ENCODE measurements at regions of chr17 and their contacts with region 1.

Region 1: GRCh38 chr17:43170766-43171585 is at the start of gene NBR1:
- DNase-seq: peak; percentile 94 to 98 (median 97)
- H3K4me3 ChIP-seq: peak within 1 kb of the TSS; percentile 85
- H3K27ac ChIP-seq: peak within 1 kb of the TSS; percentile 88 to 99
- H3K4me1 ChIP-seq: peaks cover 8% of the 10 kb centered on the region
- H3K27me3 ChIP-seq: no peaks in the 10 kb centered on the region
- CTCF ChIP-seq: peak in 2 of 3 donors; percentile 45 to 54
- EP300 ChIP-seq: no peak
- POLR2A ChIP-seq: peak; percentile 78
- total RNA-seq, gene NBR1: 58.2 to 89.1 (median 78.6) TPM

Region 2: DNA sequence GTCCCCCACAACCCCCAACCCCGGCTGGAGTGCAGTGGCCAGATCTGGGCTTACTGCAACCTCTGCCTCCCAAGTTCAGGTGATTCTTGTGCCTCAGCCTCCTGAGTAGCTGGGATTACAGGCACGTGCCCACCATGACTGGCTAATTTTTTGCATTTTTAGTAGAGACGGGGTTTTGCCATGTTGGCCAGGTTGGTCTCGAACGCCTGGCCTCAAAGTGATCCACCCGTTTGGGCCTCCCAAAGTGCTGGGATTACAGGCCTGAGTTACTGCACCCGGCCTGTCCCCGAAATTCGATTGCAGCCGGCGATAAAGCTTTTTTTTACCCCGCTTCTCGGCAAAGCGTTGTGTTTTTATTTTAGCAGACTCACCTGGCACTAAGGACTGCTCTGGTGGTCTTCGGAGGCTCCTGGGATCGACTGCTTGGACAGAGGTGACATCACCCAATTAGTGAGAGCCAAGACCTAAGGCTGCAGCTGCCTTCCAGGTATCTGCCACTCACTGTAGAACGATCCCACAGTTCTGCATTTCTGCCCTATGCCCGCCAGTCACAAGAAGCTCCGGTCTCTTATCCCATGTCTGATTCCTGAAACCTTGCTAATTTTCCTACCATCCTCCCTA is 145.7 kb after region 1 on chr17:
- intact Hi-C with region 1: loop called in 1 of 4 experiments (anchors 1 kb)
- DNase-seq: no peak
- H3K4me3 ChIP-seq: no peak overlapping the region
- H3K27ac ChIP-seq: no peak overlapping the region
- H3K4me1 ChIP-seq: no peaks in the 10 kb centered on the region
- H3K27me3 ChIP-seq: no peaks in the 10 kb centered on the region
- CTCF ChIP-seq: no peak
- EP300 ChIP-seq: no peak
- POLR2A ChIP-seq: no peak